ENCODE measurements at regions of chr17 and their contacts with region 1.

Region 1: DNA sequence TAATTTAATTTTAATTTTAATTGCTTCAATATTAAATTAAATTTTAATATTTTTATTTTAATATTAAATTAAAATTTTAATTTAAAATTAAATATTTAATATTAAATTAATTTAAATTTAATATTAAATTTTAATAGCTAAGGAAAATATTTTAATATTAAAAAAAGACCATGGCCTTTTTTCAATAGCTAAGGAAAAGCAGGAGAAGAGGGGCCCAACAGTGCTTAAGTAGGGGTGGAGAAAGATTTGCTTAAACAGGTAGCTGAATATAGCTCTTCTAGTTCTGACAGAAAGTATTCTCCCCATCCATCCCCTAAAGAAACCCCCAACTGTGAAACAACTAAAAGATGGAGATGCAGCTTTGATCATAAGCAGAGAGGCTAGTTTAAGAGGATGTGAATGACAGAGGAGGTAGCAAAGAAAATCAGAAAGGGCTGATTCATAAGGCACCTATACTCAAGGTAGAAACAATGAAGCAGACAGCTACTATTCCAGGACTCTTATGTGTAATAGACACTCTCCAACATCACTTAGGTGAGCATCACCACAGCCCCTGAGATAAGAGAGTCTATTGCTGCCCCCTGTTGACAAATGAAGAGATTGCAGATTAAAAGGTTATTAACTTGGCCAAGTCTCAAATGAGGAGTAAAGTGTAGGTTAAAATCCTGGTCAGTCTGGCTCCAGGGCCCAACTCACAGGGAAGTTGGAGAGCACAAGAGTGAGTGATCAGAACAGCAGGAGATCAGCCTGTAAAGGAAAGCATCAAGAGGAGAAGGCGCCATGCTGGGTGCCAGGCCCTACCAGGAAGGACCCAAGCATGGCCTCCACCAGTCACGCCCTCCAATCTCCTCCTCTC is 7.8 kb upstream of the RNASEK start:
- DNase-seq: no peak

Region 2: DNA sequence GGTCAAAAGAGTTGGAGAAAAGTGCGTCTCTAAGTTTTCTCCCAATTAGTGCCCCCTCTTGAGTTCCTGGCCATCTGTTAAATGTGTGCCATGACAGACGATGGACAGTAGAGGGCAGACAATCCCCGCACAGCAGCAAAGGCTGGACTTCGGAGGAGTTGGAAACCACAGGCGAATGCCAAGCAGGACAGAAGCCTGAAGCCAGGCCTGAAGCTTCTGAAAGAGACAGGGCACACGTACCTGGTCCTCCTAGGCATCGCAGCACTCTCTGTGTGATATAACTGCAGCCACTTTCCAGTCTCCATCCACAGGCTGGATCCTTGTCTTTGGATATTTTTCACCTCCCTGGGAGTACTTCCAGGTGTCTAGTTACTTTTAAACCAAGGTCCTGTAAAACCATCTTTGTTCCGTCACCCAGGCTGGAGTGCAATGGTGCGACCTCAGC is 338.5 kb before region 1 on chr17:
- intact Hi-C with region 1: loop called (anchors 2 kb)
- DNase-seq: peak; percentile 59 to 96 (median 77)

Region 3: GRCh38 chr17:6843241-6843880 is 161.3 kb before region 1 on chr17:
- intact Hi-C with region 1: loop called (anchors 1 kb)
- DNase-seq: no peak

Region 4: GRCh38 chr17:6903326-6903900 is 101.2 kb before region 1 on chr17:
- intact Hi-C with region 1: no loop called
- DNase-seq: no peak

Region 5: GRCh38 chr17:6913608-6914443 is 90.8 kb before region 1 on chr17:
- intact Hi-C with region 1: loop called (anchors 2 kb)
- DNase-seq: peak; percentile 47 to 94 (median 72)

Measured in posterior cingulate gyrus (tissue), 11 donors.